ENCODE measurements at regions of chr5 and their contacts with region 1.

Region 1: GRCh38 chr5:134738133-134738962 is at the start of gene CAMLG:
- H3K4me3 Mint-ChIP-seq: peak within 1 kb of the TSS; percentile 97
- H3K27ac Mint-ChIP-seq: peak within 1 kb of the TSS; percentile 92
- H3K4me1 Mint-ChIP-seq: peaks cover 26% of the 10 kb centered on the region
- H3K27me3 Mint-ChIP-seq: no peaks in the 10 kb centered on the region

Region 2: DNA sequence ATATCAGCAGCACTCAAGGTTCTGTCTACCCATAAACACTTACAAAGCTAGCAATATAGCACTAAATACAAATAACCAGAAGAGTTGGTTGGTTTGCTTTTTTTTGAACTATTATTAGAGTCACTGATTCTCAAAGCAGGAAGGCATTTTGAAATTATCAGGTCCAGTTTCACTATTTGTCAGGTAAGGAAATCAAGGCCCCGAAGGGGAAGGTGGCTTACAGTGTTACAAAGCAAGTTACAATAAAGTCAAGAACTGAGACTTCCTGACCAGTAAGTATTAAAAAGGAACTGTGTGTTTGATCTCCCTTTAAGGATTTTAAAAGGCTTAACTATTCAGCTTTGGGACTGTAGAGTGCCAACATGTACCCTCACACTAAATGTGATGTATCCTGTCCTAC is 780.8 kb before region 1 on chr5:
- intact Hi-C with region 1: no loop called
- H3K4me3 Mint-ChIP-seq: no peak overlapping the region
- H3K27ac Mint-ChIP-seq: no peak overlapping the region
- H3K4me1 Mint-ChIP-seq: peaks cover 14% of the 10 kb centered on the region
- H3K27me3 Mint-ChIP-seq: no peaks in the 10 kb centered on the region

Region 3: DNA sequence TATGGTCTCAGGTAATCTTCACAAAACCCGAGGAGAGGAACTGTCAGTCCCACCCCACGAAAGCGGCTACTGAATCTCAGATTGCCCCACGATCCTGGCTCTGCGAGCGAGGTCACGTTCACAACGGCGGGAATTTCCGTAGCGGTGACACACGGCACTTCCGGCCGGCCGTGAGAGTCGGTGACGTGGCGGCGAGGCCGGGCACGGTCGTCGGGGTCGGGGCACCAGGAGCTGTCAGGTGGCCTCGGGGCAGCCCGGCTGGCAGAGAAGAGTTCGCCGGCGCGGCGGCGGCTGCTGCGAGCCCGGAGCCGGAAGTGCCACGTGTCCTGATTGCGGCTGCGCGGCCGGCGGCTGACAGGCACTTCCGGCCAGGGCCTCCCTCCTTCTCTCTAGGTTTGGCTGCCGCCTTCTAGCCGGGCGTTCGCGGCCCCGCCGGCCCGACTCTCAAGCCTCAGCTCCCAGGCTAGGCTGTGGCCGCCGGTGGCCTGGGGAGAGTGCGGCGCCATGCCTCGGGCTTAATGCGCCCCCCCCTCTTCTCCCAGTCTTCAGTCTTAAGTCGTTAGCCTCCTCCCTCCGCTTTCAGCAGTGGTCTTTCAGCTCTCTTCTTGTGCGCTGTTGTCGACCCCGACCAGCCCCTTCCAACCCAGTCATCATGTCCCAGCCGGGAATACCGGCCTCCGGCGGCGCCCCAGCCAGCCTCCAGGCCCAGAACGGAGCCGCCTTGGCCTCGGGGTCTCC is 89.8 kb before region 1 on chr5 and contains the start of gene SEC24A:
- intact Hi-C with region 1: loop called (anchors 1 kb)
- H3K4me3 Mint-ChIP-seq: peak within 1 kb of the TSS; percentile 99
- H3K27ac Mint-ChIP-seq: peak within 1 kb of the TSS; percentile 100
- H3K4me1 Mint-ChIP-seq: peaks cover 7% of the 10 kb centered on the region
- H3K27me3 Mint-ChIP-seq: no peaks in the 10 kb centered on the region

Region 4: DNA sequence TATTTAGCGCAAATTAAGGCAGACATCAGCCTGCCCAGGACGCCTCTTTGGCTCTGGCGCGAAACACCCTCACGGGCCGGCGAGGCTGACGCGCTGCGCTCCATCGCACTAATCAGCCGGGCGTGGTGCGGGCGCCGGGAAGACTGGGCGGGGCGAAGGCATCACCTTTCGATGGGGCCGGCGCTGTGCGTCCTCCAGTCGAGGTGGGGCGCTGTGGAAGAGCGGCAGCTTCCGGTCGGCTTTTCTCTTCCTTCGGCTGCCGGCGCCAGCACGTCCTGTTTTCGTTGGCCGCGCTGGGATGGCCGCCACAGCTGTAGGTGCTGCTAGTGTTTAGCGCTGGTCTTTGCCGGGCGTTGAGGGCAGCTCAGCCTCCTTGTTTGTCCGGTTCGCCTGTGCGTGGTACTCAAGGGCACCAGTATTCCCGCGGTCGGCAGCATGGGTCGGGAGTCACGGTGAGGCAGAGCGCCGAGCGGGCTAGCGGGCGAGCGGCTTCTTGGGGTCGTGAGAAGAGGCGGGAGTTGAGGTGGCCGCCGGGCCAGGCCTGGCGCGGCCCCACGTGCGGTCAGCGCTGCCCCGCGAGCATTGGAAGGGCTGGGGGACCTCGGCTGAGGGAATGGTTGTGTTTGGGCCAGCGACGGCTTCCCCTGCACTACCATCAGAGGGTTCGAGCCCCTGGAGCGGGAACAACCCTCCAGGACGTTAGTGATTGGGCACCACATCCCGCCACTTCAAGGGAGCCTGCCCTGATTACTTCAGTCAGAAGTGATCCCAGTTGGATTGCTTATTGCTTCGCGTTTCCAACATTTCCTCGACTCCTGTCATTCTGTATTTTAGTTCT is 20.4 kb after region 1 on chr5 and contains the start of gene DDX46:
- intact Hi-C with region 1: loop called (anchors 1 kb)
- H3K4me3 Mint-ChIP-seq: peak within 1 kb of the TSS; percentile 100
- H3K27ac Mint-ChIP-seq: peak within 1 kb of the TSS; percentile 97
- H3K4me1 Mint-ChIP-seq: peaks cover 39% of the 10 kb centered on the region
- H3K27me3 Mint-ChIP-seq: peaks cover 4% of the 10 kb centered on the region

Region 5: DNA sequence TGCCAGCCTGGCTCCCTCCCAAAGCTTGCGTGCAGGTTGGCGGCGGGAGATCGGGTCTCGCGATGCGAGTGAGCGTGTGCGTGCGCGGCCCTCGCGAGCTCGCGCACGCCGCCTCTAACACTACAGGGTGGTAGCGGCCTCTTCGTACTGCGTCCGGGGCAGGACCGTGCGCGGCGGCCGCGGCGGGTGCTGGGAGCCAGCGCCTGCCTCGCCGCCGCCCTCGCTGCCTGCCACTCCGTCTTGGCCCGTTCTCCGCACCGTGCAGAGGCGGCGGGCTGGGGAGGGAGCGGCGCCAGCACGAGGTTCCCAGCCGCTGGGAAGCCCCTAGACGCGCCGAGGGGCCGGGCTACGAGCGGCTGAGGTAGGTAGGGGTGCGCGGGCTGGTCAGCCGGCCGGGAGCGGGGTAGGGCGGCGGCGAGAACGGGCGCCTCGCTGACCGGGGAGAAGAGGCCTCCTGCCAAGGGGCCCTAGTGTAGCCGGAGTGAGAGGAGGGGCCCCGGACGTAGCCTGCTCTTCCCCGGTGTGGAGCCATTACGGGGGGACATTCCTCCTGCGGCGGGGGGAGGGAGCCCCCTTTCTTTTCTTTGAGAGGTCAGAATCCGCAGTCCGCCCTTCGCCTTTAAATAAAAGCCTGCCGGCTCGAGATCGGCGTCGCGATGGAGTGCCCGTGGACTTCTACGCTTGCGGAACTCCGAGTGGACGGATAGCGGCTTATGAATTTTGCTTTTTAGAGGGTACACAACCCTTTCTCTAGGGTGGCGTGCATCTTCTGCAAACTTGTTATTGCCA is 107.7 kb after region 1 on chr5 and contains the start of gene C5orf24:
- intact Hi-C with region 1: loop called (anchors 5 kb)
- H3K4me3 Mint-ChIP-seq: peak within 1 kb of the TSS; percentile 87
- H3K27ac Mint-ChIP-seq: peak within 1 kb of the TSS; percentile 96
- H3K4me1 Mint-ChIP-seq: peaks cover 21% of the 10 kb centered on the region
- H3K27me3 Mint-ChIP-seq: no peaks in the 10 kb centered on the region

Region 6: DNA sequence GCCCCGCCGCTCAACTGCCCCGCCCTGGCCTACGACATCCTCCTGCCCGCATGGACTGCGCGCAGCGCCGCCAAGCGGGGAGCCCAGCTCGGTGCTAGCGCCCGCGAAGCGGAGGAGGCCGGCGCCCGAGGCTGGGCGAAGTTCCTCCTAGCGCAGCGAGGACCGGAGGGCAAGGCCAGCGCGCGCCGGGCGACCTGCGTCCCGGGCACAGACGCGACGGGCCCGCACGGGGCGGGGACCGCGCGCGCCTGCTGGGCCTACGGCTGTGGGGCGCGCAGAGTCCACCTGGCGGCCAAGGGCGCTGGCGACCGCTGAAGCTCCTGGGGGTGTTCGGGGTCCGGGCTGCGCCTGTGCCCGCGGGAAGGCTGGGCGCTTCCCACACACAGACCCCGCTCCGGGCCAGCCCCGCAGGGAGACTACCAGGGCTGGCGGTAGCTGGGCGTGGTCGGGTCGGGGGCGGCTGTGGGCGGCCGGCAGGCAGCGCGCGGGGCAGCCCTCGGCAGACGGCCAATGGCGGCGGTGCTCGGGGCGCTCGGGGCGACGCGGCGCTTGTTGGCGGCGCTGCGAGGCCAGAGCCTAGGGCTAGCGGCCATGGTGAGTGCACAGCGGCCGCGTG is 166.4 kb after region 1 on chr5 and contains the start of gene PCBD2:
- intact Hi-C with region 1: loop called (anchors 2 kb)
- H3K4me3 Mint-ChIP-seq: peak within 1 kb of the TSS; percentile 86
- H3K27ac Mint-ChIP-seq: peak within 1 kb of the TSS; percentile 93
- H3K4me1 Mint-ChIP-seq: peaks cover 14% of the 10 kb centered on the region
- H3K27me3 Mint-ChIP-seq: no peaks in the 10 kb centered on the region

Measured in dendritic cell treated with granulocyte-macrophage colony-stimulating factor and Interleukin-4, amounts not matched to agents 40 ng/mL and 50 ng/mL, for 4 days (primary cell).